H1 (cell line): ENCODE measurements at regions of chr15 and their contacts with region 1.

Region 1: DNA sequence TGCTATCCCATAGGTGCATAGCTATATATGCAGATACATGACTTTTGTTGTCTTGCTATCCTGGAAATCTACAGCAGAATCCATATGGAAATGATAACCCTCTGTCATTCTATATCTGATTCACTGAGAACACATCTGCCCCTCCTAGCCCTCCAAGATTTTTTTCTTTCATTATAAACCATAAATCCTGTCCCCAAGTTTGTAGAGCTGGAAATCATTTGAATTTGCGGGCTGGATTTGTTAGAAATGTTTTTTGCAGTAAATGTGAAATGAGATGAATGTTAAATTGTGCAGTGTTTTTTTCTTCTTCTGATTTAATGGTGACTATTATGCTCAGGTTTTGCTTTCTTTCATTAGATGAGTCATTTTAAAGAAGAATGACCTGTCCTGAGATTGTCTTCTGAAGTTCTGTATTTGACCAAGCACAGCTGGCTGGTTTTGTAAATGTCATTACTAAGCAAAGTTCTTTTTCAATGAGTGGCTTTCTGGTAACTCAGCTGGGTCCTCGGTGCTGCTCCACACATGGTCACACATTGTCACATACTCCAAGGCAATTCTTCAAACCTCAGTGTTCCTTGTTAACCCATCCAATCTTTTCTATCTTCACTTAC is 25.3 kb upstream of the ABHD17C start:
- DNase-seq: no peak
- H3K4me3 ChIP-seq: no peak overlapping the region
- H3K27ac ChIP-seq: no peak overlapping the region
- H3K4me1 ChIP-seq: no peaks in the 10 kb centered on the region
- H3K27me3 ChIP-seq: no peaks in the 10 kb centered on the region
- CTCF ChIP-seq: no peak
- EP300 ChIP-seq: no peak
- POLR2A ChIP-seq: no peak
- RAD21 ChIP-seq: no peak

Region 2: DNA sequence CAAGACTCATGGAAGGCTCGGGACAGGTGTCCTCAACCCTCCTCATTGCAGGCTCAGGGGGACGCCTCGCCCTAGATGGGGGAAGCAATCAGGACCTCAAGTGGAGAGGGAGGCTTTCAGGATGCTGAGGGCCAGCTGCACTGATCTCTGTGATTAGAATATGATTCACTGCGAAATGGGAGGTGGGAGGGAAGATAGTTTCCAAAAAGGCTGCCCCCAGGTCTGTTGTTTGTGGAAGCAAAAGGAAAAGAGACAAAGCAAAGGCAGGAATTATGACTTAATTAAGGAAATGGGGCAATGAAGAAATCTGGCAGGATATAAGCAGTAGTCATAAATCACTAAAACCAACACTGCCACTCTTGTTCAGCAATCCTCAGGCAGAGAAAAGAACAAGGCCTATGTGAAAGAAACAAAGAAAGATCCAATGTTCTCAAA is 60.2 kb before region 1 on chr15:
- CTCF ChIA-PET with region 1: no interaction called
- POLR2A ChIA-PET with region 1: no interaction called
- DNase-seq: no peak
- H3K4me3 ChIP-seq: no peak overlapping the region
- H3K27ac ChIP-seq: no peak overlapping the region
- H3K4me1 ChIP-seq: peaks cover 0 to 10% (median 3%) of the 10 kb centered on the region in 4 experiments; a peak in 4 of 7 replicates
- H3K27me3 ChIP-seq: no peaks in the 10 kb centered on the region; a peak in 1 of 7 replicates
- CTCF ChIP-seq: no peak
- EP300 ChIP-seq: no peak
- POLR2A ChIP-seq: no peak
- RAD21 ChIP-seq: no peak

Region 3: GRCh38 chr15:80684697-80685096 is 14.9 kb after region 1 on chr15:
- CTCF ChIA-PET with region 1: interaction called, 10 read pairs
- POLR2A ChIA-PET with region 1: interaction called, 4 read pairs
- DNase-seq: no peak
- H3K4me3 ChIP-seq: no peak overlapping the region
- H3K27ac ChIP-seq: no peak overlapping the region
- H3K4me1 ChIP-seq: no peaks in the 10 kb centered on the region
- H3K27me3 ChIP-seq: 0 out of 7 replicates have a peak, but pooled peaks cover 0 to 2% (median 0%) of the 10 kb centered on the region in 4 experiments
- CTCF ChIP-seq: no peak
- EP300 ChIP-seq: no peak
- POLR2A ChIP-seq: no peak
- RAD21 ChIP-seq: no peak